Activated naive CD4-positive, alpha-beta T cell treated with anti-CD3 and anti-CD28 coated beads for 36 hours (primary cell): ENCODE measurements at regions of chr1 and their contacts with region 1.

Region 1: DNA sequence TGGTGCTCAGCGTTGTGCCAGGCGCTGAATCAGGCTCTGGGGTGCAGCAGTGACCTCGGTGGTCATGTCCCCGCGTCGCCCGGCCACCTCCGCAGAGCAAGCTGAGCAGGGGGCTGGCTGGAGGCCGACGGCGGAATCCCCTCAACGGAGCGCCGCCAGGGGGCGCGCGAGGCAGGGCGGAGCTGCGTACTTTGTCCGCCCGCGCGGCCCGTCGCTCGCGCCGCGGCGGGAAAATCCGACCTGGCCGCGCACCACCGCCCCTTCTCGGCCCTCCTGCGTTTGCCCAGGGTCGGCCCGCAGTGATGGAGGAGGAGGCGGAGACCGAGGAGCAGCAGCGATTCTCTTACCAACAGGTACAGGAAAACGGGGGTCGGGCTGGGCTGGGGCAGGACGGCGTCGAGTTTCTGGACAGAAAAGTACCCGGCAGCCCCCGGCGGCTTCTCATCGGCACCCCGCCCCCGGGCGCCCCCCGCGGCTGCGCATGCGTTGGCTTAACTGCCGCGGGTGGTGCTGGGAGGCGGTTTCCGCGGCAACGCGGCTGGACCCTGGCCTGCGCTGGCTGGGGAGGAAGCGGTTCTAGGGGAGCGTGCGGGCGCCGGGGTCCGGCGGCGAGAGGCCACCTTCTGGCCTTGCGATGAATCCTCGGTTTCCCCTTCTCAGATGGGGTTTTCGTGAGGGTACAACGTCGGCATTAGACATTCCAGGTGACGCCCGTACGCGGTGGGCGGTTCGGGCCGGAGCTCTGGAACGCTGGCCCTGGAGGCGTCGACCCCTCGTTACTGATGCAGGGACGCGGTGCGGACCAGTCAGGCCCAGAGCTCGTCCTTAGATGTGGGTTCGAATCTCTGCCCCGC is at the start of gene CENPS:
- DNase-seq: peak; percentile 79
- H3K4me3 Mint-ChIP-seq: peak within 1 kb of the TSS; percentile 93
- H3K27ac Mint-ChIP-seq: peak within 1 kb of the TSS; percentile 93
- H3K4me1 Mint-ChIP-seq: peaks cover 21% of the 10 kb centered on the region
- H3K27me3 Mint-ChIP-seq: no peaks in the 10 kb centered on the region
- total RNA-seq, gene CENPS: 21.5 to 23.4 TPM

Region 2: DNA sequence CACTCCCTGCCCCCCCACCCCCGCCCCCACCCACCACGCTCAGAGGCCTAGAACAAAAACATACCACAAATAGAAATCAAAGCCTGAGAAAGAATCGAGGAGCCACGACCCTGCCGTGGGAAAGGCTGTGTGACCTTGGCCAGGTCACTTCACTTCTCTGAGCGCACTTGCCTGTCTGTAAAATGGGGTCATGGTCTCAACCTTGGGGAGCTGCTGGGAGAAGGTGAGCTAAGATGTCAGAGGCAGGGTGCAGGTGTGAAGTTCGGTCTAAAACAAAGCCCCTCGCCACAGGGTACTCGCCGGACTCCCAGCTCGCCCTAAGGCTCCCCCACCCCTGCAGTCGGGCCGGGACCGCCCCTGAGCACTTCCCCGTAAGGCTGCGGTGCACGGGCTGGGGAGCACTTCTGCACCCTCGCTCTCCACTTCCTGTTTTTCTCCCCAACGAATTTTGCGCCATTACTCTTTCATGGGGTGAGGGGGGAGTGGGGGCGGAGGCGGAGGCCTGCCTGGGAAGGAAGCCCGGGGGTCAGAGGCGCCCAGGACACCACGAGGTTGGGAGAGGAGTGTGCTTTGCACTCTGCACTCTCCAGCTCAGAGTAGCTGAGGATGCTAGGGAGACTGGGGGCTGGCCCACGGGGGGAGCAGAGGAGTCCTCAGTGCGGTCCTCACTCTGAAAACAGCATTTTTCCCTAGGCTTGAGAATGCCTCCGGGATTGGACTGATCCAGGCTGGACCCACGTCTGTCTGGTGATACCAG is 800.8 kb before region 1 on chr1:
- CTCF ChIA-PET with region 1: no interaction called
- intact Hi-C with region 1: loop called (anchors 5 kb)
- DNase-seq: peak; percentile 87
- H3K4me3 Mint-ChIP-seq: peak overlapping the region; percentile 85
- H3K27ac Mint-ChIP-seq: peak overlapping the region; percentile 93
- H3K4me1 Mint-ChIP-seq: peaks cover 67% of the 10 kb centered on the region
- H3K27me3 Mint-ChIP-seq: no peaks in the 10 kb centered on the region

Region 3: DNA sequence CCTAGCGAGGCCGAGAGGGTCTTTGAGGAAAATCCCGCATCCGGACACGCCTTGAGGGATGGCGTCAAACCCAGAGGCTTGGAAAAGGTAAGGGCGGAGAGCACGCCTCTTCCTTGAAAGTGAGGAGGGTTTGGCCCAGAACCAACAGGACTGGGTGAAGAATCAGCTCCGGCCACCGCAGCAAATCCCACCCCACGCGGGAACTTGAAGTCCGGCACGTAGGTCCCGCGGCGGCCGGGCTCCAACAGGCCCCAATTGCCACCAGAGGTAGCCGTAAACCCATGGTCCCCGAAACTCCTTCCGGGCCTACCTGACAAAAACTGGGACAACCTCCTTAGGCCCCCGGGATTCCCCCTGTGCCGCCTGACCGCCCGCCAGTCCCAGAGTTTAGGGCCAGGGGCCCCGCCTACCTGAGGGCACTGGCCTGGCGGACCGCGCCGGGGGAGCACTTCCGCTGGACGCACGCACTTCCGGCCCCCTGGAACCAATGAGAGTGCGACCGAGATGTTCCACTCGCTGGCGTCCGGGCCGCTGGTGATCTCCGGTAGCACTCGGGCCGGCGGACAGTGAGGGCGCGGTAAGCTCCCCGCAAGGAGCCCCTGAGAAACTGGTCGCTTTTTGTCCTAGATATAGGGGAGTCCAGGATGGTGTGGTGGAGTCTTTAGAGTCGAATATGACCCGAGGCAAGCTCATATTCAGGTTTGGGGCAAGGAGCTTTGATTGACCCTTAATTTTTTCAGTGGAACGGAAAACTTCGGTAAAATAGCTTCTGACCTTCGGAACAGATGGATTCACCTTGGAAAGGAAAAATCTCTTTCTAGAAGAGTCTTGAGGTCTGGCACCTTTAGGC is 487.3 kb before region 1 on chr1 and contains the starts of genes LZIC and NMNAT1:
- CTCF ChIA-PET with region 1: no interaction called
- intact Hi-C with region 1: loop called (anchors 2 kb)
- DNase-seq: peak; percentile 94
- H3K4me3 Mint-ChIP-seq: peak within 1 kb of the TSS; percentile 95
- H3K27ac Mint-ChIP-seq: peak within 1 kb of the TSS; percentile 92
- H3K4me1 Mint-ChIP-seq: peaks cover 27% of the 10 kb centered on the region
- H3K27me3 Mint-ChIP-seq: no peaks in the 10 kb centered on the region
- total RNA-seq, gene LZIC: 26.1 to 27.0 TPM
- total RNA-seq, gene NMNAT1: 7.5 to 8.0 TPM

Region 4: GRCh38 chr1:10170239-10170574 is 260.2 kb before region 1 on chr1:
- CTCF ChIA-PET with region 1: no interaction called
- intact Hi-C with region 1: loop called (anchors 1 kb)
- DNase-seq: peak; percentile 48
- H3K4me3 Mint-ChIP-seq: no peak overlapping the region
- H3K27ac Mint-ChIP-seq: peak overlapping the region; percentile 87
- H3K4me1 Mint-ChIP-seq: peaks cover 40% of the 10 kb centered on the region
- H3K27me3 Mint-ChIP-seq: no peaks in the 10 kb centered on the region

Region 5: GRCh38 chr1:10378081-10378841 is 52.2 kb before region 1 on chr1:
- CTCF ChIA-PET with region 1: interaction called, 7 read pairs
- intact Hi-C with region 1: loop called (anchors 1 kb)
- DNase-seq: no peak
- H3K4me3 Mint-ChIP-seq: no peak overlapping the region
- H3K27ac Mint-ChIP-seq: no peak overlapping the region
- H3K4me1 Mint-ChIP-seq: no peaks in the 10 kb centered on the region
- H3K27me3 Mint-ChIP-seq: no peaks in the 10 kb centered on the region

Region 6: GRCh38 chr1:10472220-10473144 is 42.0 kb after region 1 on chr1 and contains the start of gene DFFA:
- CTCF ChIA-PET with region 1: interaction called, 3 read pairs
- intact Hi-C with region 1: loop called (anchors 1 kb)
- DNase-seq: peak; percentile 97
- H3K4me3 Mint-ChIP-seq: peak within 1 kb of the TSS; percentile 90
- H3K27ac Mint-ChIP-seq: peak within 1 kb of the TSS; percentile 84
- H3K4me1 Mint-ChIP-seq: peaks cover 38% of the 10 kb centered on the region
- H3K27me3 Mint-ChIP-seq: no peaks in the 10 kb centered on the region
- total RNA-seq, gene DFFA: 34.2 to 36.1 TPM

Region 7: GRCh38 chr1:10867138-10867721 is 436.8 kb after region 1 on chr1:
- CTCF ChIA-PET with region 1: no interaction called
- intact Hi-C with region 1: loop called (anchors 2 kb)
- DNase-seq: peak; percentile 52
- H3K4me3 Mint-ChIP-seq: no peak overlapping the region
- H3K27ac Mint-ChIP-seq: no peak overlapping the region
- H3K4me1 Mint-ChIP-seq: peaks cover 12% of the 10 kb centered on the region
- H3K27me3 Mint-ChIP-seq: peaks cover 64% of the 10 kb centered on the region